ENCODE measurements at regions of chr20 and their contacts with region 1.

Region 1: DNA sequence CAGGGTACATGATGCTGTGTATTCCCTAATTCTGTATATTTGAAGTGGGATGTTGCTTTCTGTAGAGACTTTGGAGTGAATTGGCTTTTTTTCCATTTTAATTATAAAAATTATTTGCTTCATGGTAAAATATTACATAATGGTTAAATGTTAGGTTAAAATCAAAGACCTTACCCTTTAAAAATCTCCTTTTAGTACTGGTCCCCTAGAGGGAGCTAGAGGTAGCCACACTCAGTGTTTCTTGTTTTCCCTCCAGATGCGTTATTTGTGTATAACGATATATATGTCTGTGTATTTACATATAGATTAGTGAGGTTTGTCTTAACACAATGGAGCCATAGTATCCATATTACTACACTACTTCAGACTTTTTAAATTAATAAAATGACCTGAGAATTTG is 146.7 kb downstream of the PLCB4 start:
- DNase-seq: no peak
- ATAC-seq: 0 out of 2 replicates have a peak, but pooled peaks have one; percentile 39
- H3K4me3 Mint-ChIP-seq: no peak overlapping the region
- H3K27ac Mint-ChIP-seq: no peak overlapping the region
- H3K4me1 Mint-ChIP-seq: peaks cover under 1% of the 10 kb centered on the region
- H3K27me3 Mint-ChIP-seq: no peaks in the 10 kb centered on the region
- CTCF ChIP-seq: no peak; the same call in 1 of the 2 replicates

Region 2: DNA sequence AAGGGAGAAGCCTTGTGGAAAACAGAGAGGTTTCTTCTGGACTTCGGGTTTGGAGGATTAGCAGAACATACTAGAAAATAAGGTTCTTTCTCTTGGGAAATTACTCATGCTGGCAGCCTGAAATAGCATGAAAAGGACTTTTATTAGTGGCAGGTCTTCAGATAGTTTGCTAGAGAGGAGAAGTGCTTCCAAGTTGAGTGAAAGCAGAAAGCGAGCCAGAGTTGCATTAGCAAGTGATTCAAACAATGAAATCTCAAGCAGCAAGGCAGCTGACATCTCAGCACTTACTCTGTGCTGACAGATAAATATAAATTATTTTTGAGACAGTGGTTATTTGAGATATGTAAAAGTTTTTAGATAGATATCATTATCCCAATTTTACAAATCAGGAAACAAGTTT is 54.8 kb before region 1 on chr20:
- CTCF ChIA-PET with region 1: no interaction called
- POLR2A ChIA-PET with region 1: no interaction called
- DNase-seq: no peak
- ATAC-seq: peak; percentile 36; the same call in 1 of the 2 replicates
- H3K4me3 Mint-ChIP-seq: no peak overlapping the region
- H3K27ac Mint-ChIP-seq: 0 out of 2 replicates have a peak overlapping the region, but pooled peaks have one; percentile 16
- H3K4me1 Mint-ChIP-seq: peaks cover 26% of the 10 kb centered on the region
- H3K27me3 Mint-ChIP-seq: no peaks in the 10 kb centered on the region
- CTCF ChIP-seq: no peak

Region 3: DNA sequence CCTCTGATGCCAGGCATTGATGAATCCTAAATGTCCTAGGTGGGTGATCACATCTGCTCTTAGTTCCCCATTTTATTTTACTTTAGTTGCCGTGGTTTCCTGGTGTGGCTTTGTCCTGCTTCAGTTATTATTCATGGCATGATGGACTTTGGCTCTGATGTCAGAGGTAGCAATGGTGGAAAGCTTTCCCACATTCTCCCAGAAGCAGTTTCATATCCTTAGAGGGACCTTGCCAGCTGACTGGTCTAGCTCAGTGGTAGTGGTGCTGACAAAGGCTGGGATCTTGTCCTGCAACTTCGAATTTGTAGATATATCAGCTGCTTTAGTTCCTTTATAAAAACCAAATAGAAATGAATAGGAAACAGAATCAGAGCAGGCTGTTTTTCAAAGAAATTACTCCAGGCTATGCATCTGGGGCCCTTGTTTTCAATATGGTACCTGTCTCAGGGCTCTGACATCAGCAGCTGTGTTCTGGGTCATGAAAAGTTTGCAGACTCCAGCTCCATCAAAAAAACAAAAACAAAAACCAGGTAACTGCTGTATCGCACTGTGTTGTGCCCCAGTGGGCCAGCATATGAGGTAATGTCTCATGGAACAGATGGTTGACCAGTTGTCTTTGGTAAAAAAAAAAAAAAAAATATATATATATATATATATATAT is 13.0 kb before region 1 on chr20:
- CTCF ChIA-PET with region 1: interaction called, 10 read pairs
- POLR2A ChIA-PET with region 1: no interaction called
- DNase-seq: no peak
- ATAC-seq: no peak
- H3K4me3 Mint-ChIP-seq: no peak overlapping the region
- H3K27ac Mint-ChIP-seq: no peak overlapping the region
- H3K4me1 Mint-ChIP-seq: peaks cover 23% of the 10 kb centered on the region
- H3K27me3 Mint-ChIP-seq: no peaks in the 10 kb centered on the region
- CTCF ChIP-seq: no peak